PC-9 (cell line): ENCODE measurements at regions of chr5 and their contacts with region 1.

Region 1: GRCh38 chr5:60487885-60488442 is 212.0 kb downstream of the DEPDC1B start:
- DNase-seq: peak; percentile 53 to 63
- H3K4me3 ChIP-seq: peak overlapping the region; percentile 67
- H3K27ac ChIP-seq: peak overlapping the region; percentile 75
- H3K4me1 ChIP-seq: peaks cover 20% of the 10 kb centered on the region
- H3K27me3 ChIP-seq: no peaks in the 10 kb centered on the region
- CTCF ChIP-seq: no peak

Region 2: DNA sequence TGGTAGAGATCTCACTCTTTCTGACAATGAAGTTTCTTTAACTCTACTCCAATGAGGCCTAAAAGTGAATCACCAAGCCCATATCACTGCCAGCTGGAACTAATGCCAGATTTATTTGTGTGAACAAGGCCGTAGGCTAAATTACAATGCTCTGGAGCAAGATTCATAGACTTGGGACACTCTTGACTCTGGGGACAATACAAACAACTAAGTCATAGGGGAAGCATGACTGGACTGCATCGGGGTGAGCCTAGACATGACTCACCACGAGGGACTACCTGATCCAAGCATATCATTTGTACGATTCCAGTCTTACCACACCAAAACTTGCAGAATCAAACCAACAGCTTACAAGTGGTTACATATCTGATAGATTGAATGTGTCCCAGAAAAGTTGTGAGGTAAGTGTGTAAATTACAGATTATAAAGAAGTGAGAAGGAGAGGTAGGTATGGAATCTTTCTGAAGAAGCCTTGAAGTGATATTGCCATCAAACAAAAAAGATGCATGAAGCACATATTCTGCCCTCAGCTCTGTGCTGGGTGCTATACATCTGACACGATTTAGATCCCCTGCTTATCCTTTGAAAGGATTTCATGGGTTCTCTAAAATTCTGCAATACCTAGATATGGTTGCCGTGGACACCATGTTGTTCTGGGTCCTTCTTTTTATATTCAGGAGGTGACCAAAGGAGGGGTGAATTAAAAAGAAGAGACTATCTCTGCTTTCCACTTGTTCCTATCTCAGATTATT is 395.1 kb before region 1 on chr5:
- CTCF ChIA-PET with region 1: no interaction called
- POLR2A ChIA-PET with region 1: no interaction called
- intact Hi-C with region 1: loop called (anchors 10 kb)
- DNase-seq: peak; percentile 61 to 81
- H3K4me3 ChIP-seq: no peak overlapping the region
- H3K27ac ChIP-seq: peak overlapping the region; percentile 51
- H3K4me1 ChIP-seq: peaks cover 11% of the 10 kb centered on the region; the same call in 1 of the 2 replicates
- H3K27me3 ChIP-seq: no peaks in the 10 kb centered on the region
- CTCF ChIP-seq: no peak

Region 3: GRCh38 chr5:60594715-60595477 is 106.9 kb after region 1 on chr5:
- CTCF ChIA-PET with region 1: no interaction called
- POLR2A ChIA-PET with region 1: no interaction called
- intact Hi-C with region 1: loop called (anchors 5 kb)
- DNase-seq: no peak
- H3K4me3 ChIP-seq: no peak overlapping the region
- H3K27ac ChIP-seq: no peak overlapping the region
- H3K4me1 ChIP-seq: no peaks in the 10 kb centered on the region
- H3K27me3 ChIP-seq: no peaks in the 10 kb centered on the region
- CTCF ChIP-seq: no peak

Region 4: GRCh38 chr5:60660038-60660437 is 172.1 kb after region 1 on chr5:
- CTCF ChIA-PET with region 1: no interaction called
- POLR2A ChIA-PET with region 1: no interaction called
- intact Hi-C with region 1: no loop called
- DNase-seq: no peak
- H3K4me3 ChIP-seq: no peak overlapping the region
- H3K27ac ChIP-seq: no peak overlapping the region
- H3K4me1 ChIP-seq: no peaks in the 10 kb centered on the region
- H3K27me3 ChIP-seq: no peaks in the 10 kb centered on the region
- CTCF ChIP-seq: no peak

Region 5: GRCh38 chr5:60810438-60811085 is 322.6 kb after region 1 on chr5:
- CTCF ChIA-PET with region 1: no interaction called
- POLR2A ChIA-PET with region 1: no interaction called
- intact Hi-C with region 1: no loop called
- DNase-seq: peak; percentile 17 to 82
- H3K4me3 ChIP-seq: no peak overlapping the region
- H3K27ac ChIP-seq: peak overlapping the region; percentile 62
- H3K4me1 ChIP-seq: peaks cover 40% of the 10 kb centered on the region
- H3K27me3 ChIP-seq: no peaks in the 10 kb centered on the region
- CTCF ChIP-seq: no peak